AG04449 (cell line): ENCODE measurements at regions of chr4 and their contacts with region 1.

Region 1: DNA sequence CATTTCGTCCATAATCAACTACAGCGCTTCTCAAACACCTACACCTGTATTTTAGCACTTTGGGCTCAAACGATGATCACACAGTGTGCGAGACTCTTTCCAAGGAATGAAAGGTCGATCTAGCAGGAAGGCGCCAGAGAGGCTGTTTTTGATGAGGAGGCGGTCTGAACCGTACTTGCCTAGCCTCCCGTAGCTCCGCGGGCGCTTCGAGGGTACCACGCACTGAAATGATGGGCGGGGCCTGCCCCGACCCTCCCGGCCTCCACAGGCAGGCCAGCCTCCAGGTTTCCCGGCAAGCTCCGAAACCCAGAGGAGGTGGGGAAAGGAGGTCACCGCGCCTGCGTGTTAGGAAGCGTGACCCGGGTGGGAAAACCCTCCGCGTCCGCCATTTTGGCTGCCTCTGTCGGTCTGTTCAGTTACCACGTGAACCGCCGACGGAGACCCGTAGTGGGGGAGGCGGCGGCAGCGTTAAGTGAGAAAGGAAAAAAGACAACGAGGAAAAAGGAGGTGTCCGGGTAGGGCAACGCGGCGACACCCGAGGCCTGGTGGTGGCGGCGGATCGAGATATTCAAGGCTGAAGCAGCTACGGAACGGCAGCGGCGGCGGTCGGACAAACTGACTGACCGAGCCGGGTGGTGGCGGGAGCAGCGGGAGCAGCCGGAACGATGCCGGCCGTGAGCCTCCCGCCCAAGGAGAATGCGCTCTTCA is at the start of gene NAA15:
- DNase-seq: peak; percentile 80
- H3K4me3 ChIP-seq: peak within 1 kb of the TSS; percentile 88
- CTCF ChIP-seq: no peak

Region 2: DNA sequence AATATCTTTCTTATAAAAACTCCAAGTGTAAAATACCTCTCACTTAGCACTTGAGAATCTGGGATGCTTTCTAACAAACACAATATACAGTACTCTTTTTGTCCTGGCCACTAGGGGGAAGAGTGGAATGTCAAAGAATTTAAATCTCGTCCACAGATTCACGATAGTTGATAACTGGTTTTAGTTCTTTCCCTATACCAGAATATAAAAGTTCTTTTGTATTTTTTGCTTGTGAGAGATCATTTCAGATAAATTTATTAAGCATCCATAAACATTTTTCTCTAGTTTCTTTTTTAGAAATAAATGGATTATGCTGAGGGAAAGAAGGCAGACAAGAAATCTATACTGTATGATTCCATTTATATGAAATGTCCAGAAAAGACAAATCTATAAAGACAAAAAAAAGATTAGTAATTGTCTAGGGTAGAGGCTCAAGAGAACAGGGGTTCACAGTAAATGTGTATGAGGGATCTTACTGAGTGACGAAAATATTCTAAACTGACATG is 71.7 kb before region 1 on chr4:
- CTCF ChIA-PET with region 1: interaction called, 24 read pairs
- POLR2A ChIA-PET with region 1: no interaction called
- DNase-seq: no peak
- H3K4me3 ChIP-seq: no peak overlapping the region
- CTCF ChIP-seq: peak; percentile 47

Region 3: DNA sequence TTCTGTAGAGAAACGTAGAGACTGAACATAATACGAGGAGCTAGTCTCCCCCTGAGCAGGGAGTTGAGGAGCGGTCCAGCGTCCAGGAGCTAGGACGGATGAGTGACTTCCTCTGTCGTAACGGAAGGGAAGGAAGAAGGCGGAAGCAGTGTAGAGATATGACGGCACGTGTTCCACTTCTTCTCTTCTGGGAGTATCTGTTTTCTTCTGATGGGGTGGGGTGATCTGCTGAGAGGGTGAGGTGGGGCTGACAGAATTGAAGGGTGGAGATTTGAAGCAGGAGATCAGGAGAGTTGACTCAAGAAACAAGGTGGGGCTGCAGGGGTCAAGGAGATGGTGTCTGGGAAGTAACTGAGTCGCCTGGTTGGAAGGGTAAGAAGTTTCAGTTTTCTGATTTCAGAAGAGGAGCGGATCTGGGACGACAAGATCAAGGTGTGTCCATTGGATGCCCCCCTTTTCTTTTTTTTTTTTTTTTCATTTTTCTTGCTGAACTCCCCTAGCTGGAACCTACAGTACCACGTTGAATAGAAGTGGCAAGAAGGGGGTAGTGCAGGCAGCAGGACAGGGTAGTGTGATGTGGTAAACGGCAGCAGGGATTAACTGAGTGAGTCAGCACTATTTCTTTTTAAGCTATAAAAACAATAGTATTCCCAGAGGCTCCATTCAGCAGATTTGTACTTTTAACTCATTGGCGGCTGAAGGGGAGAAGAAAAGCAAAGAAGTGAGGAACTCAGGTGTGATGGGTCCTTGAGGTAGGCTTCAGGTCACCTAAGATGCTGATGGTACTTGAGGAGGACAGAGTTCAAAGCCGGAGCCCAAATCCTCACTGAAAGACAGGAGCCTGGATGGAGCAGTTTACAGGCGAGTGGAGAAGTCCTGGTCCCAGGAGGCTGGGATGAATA is 305.6 kb after region 1 on chr4:
- CTCF ChIA-PET with region 1: no interaction called
- POLR2A ChIA-PET with region 1: no interaction called
- DNase-seq: no peak
- H3K4me3 ChIP-seq: no peak overlapping the region
- CTCF ChIP-seq: peak; percentile 13